ENCODE measurements at regions of chr14 and their contacts with region 1.

Region 1: GRCh38 chr14:87944987-87945604 is 47.9 kb downstream of the GALC start:
- DNase-seq: peak; percentile 64 to 79 (median 70)
- H3K4me3 ChIP-seq: no peak overlapping the region
- H3K27ac ChIP-seq: no peak overlapping the region
- H3K4me1 ChIP-seq: no peaks in the 10 kb centered on the region
- H3K27me3 ChIP-seq: no peaks in the 10 kb centered on the region

Region 2: GRCh38 chr14:87934185-87934584 is 10.9 kb before region 1 on chr14:
- CTCF ChIA-PET with region 1: interaction called, 19 read pairs
- POLR2A ChIA-PET with region 1: no interaction called
- DNase-seq: no peak
- H3K4me3 ChIP-seq: no peak overlapping the region
- H3K27ac ChIP-seq: no peak overlapping the region
- H3K4me1 ChIP-seq: no peaks in the 10 kb centered on the region
- H3K27me3 ChIP-seq: no peaks in the 10 kb centered on the region

Region 3: DNA sequence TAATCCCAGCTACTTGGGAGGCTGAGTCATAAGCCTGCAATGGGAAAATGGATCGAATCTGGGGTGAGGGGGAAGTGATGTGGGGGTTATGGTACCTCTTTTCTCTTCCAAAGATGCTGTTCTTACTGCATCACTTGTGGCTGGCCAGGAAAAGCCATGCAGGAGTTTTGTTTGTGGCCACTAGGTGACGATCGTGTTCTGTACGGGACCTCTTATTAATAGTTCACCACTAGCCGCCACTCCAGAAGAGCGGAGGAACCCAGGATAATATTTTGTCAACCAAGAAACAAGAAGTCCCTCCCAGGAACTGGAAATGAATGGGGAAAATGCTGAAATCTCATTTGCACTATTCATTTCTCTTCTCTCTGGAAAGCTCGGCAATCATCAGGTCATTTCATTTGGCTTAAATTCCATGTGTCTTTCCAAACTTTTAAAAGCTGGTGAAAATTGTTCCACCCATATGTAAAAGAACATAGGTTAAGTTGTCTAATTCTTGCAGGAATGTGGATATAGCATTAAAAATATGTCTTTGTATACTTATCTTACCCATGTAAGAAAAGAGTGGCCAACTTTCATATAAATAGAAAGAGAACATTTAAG is 68.8 kb after region 1 on chr14:
- CTCF ChIA-PET with region 1: interaction called, 20 read pairs
- POLR2A ChIA-PET with region 1: no interaction called
- DNase-seq: peak; percentile 70 to 85 (median 81)
- H3K4me3 ChIP-seq: peak overlapping the region in 1 of 7 experiments; percentile 17
- H3K27ac ChIP-seq: no peak overlapping the region
- H3K4me1 ChIP-seq: peaks cover 0 to 3% (median 0%) of the 10 kb centered on the region in 4 experiments
- H3K27me3 ChIP-seq: no peaks in the 10 kb centered on the region

Region 4: DNA sequence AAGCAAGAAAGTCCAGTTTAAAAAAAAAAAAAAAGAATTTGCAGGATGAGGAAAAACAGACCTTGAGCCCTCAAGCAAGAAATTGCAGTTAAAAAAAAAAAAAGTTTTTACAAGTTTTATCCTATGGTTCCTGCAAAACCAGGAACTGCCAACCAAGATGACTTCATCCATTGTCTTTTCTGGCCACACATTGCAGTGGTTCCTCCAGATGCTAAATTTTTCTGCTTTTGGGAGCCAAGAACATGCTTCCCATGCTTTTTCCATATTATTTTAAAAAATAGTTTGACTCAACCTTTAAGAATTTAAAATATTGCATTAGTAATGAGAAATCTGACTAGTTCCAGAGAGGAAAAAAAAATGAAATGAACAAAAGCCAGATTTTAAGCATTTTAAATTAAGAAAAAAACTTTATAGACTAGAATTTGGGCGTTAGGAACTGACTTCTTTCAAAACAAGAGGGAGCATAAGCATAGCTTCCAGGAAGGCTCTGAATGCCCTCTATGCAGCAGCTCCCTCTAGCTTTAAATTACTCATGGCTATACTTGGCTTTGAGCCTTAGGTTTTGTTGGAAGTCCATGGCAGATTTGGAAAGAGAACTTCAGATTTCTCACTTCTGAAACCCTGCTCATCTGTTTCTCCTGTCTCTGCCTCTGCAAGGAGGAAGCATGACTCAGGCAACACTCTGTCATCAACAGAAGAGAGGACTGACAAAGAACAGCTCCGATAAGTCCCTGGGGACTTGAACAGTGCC is 184.4 kb after region 1 on chr14:
- CTCF ChIA-PET with region 1: no interaction called
- POLR2A ChIA-PET with region 1: no interaction called
- DNase-seq: peak; percentile 19 to 64 (median 53)
- H3K4me3 ChIP-seq: peak overlapping the region in 2 of 7 experiments; percentile 23 to 31
- H3K27ac ChIP-seq: no peak overlapping the region
- H3K4me1 ChIP-seq: peaks cover 0 to 8% (median 5%) of the 10 kb centered on the region in 4 experiments
- H3K27me3 ChIP-seq: no peaks in the 10 kb centered on the region

Region 5: DNA sequence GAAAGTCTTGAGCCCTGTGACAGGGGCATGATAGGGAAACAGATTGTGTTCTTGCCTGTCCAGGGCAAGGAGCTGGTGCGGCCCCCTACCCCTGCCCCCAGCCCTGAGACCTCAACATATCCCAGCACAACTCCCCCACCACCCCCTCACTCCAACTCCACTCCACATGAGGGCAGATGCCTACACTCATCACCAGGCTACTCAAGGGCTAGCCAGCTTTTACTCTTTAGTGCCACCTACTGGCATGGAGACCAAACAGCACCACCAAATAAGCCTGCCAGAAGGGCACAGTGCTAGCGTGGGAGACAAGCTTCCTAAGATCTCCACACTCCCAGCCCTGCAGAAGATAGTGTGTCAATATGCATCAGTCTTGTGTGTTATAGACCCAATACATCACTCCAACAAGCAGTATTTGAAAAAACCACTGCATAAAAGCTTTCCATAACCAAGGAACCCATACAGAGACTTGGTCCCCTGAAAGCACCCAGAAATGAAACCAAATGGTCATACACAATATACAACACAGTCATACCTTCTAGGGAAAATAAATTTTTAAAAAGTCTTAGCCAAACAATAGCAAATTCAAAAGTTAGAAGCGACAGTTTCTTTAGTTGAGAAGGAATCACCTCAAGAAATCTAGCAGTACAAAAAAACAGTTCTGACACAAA is 223.5 kb after region 1 on chr14:
- CTCF ChIA-PET with region 1: interaction called, 18 read pairs
- POLR2A ChIA-PET with region 1: no interaction called
- DNase-seq: peak; percentile 30 to 65 (median 52)
- H3K4me3 ChIP-seq: no peak overlapping the region
- H3K27ac ChIP-seq: no peak overlapping the region
- H3K4me1 ChIP-seq: no peaks in the 10 kb centered on the region
- H3K27me3 ChIP-seq: peaks cover 0 to 3% (median 0%) of the 10 kb centered on the region in 5 experiments

Region 6: GRCh38 chr14:88380405-88380804 is 435.3 kb after region 1 on chr14:
- CTCF ChIA-PET with region 1: interaction called, 24 read pairs
- POLR2A ChIA-PET with region 1: no interaction called
- DNase-seq: peak; percentile 22 to 43 (median 37)
- H3K4me3 ChIP-seq: no peak overlapping the region
- H3K27ac ChIP-seq: no peak overlapping the region
- H3K4me1 ChIP-seq: peaks cover 0 to 4% (median 3%) of the 10 kb centered on the region in 4 experiments
- H3K27me3 ChIP-seq: peaks cover 0 to 2% (median 0%) of the 10 kb centered on the region in 5 experiments

Measured in common myeloid progenitor, CD34-positive (primary cell).